ENCODE measurements at regions of chr2 and their contacts with region 1.

Region 1: DNA sequence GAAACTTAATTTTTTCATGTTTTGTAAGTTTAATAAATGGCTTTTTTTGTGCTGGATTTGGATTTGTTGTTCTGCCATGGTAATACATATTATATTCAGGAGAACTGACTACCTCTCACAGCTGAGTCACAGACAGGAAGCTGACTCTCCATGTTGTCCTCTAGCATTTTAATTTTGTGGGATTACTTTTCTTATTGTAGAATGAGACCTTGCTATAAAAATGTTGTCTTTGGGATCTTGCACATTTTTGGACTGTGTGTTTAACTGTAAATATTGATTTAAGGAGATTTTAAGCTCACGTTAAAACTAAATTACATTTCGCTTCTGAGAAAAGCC is 48.8 kb downstream of the MAP4K4 start:
- DNase-seq: peak; percentile 56
- H3K4me3 ChIP-seq: no peak overlapping the region
- H3K27ac ChIP-seq: peak overlapping the region; percentile 31
- H3K4me1 ChIP-seq: peaks cover 60% of the 10 kb centered on the region
- H3K27me3 ChIP-seq: no peaks in the 10 kb centered on the region
- CTCF ChIP-seq: no peak

Region 2: GRCh38 chr2:101710471-101711318 is 35.7 kb before region 1 on chr2:
- CTCF ChIA-PET with region 1: no interaction called
- POLR2A ChIA-PET with region 1: no interaction called
- intact Hi-C with region 1: loop called (anchors 5 kb)
- DNase-seq: peak; percentile 80
- H3K4me3 ChIP-seq: no peak overlapping the region
- H3K27ac ChIP-seq: peak overlapping the region; percentile 16
- H3K4me1 ChIP-seq: peaks cover 50% of the 10 kb centered on the region
- H3K27me3 ChIP-seq: no peaks in the 10 kb centered on the region
- CTCF ChIP-seq: no peak